CD4-positive, alpha-beta T cell (primary cell): ENCODE measurements at regions of chr11 and their contacts with region 1.

Region 1: DNA sequence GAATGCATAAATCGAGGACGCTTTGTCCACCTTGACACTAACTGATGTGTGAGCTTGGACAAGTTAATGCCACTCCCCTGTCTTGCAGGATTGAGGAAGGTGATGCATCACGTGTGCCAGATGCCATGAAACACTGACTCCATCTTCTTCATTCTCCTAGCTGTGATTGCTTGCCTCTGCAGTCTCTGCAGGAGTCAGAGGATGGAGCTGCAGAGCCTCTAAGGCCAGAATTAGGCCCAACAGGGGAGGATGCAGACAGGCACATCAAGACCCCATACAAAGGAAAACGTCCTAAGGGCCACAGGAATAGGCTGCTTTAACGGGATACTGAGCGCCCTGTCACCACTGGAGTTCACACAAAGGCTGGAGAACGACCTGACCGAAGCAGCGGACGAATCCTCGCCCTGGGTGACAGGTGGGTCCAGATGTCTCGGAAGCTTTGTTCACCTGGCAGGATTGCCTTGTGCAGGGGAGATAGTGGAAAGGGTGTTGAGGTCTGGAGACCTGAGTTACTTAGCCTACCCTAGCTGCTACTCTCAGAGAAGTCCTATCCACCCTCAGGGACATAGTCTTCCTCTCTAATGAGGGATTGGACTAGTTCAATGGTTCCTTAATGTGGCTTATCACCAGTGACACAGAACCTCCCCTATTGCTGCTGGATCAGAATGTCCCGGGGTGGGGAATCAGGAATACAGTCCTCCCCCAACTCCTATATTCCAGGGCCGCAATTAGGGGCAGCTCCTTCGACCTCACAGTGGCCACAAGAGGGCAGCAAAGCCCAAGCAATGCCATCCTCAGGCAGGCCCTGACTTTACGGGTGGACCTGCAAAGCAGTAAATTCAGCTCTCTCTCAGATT is 32.4 kb downstream of the DBX1 start:
- DNase-seq: peak; percentile 63 to 84 (median 70)
- ATAC-seq: peak; percentile 73
- H3K4me3 ChIP-seq: no peak overlapping the region
- H3K4me3 Mint-ChIP-seq: no peak overlapping the region
- H3K27ac ChIP-seq: no peak overlapping the region
- H3K27ac Mint-ChIP-seq: no peak overlapping the region
- H3K4me1 ChIP-seq: peaks cover 12% of the 10 kb centered on the region
- H3K4me1 Mint-ChIP-seq: peaks cover 5% of the 10 kb centered on the region
- H3K27me3 ChIP-seq: peaks cover 0 to 7% of the 10 kb centered on the region in 2 experiments
- H3K27me3 Mint-ChIP-seq: peaks cover 19% of the 10 kb centered on the region
- CTCF ChIP-seq: peak; percentile 80

Region 2: DNA sequence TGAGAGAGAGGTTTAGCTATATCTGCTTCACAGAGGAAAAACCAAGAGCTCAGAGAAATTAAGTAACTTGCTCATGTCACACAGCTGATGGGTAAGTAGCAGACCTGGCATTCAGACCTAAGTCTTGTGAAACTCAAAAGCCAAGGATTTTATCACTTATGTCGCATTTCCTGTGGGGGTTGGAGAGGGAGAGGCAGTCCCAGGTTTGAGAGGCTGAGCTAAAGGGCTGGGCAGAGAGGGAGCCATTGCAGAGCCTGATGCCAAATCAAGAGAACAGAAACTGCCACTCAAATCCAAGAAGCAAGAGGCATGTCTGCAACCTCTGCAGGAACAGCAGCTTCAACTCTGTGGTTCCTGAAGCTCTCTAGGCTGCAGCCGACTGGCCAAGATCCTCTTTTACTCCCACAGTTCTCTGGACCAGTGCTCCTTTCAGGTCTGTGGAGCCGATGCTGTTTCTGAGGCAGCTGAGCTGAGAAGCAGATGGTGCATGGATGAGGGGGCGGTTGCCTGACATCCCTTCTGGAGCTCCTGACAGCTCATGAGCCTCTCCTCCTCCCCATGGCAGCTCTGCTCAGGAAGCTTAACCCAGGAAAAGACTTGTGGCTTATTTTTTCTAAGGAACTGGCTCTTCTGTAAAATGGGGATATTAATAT is 462.9 kb before region 1 on chr11:
- CTCF ChIA-PET with region 1: no interaction called
- POLR2A ChIA-PET with region 1: no interaction called
- intact Hi-C with region 1: no loop called
- DNase-seq: no peak
- ATAC-seq: no peak
- H3K4me3 ChIP-seq: no peak overlapping the region
- H3K4me3 Mint-ChIP-seq: no peak overlapping the region
- H3K27ac ChIP-seq: no peak overlapping the region
- H3K27ac Mint-ChIP-seq: no peak overlapping the region
- H3K4me1 ChIP-seq: peaks cover 4% of the 10 kb centered on the region
- H3K4me1 Mint-ChIP-seq: no peaks in the 10 kb centered on the region
- H3K27me3 ChIP-seq: peaks cover 0 to 2% of the 10 kb centered on the region in 2 experiments
- H3K27me3 Mint-ChIP-seq: peaks cover 5% of the 10 kb centered on the region
- CTCF ChIP-seq: no peak

Region 3: GRCh38 chr11:19951558-19952115 is 176.3 kb before region 1 on chr11:
- CTCF ChIA-PET with region 1: no interaction called
- POLR2A ChIA-PET with region 1: no interaction called
- intact Hi-C with region 1: loop called in 1 of 2 experiments (anchors 5 kb)
- DNase-seq: peak in 3 of 14 experiments; percentile 46 to 61 (median 52)
- ATAC-seq: no peak
- H3K4me3 ChIP-seq: peak overlapping the region; percentile 5
- H3K4me3 Mint-ChIP-seq: peak overlapping the region; percentile 32
- H3K27ac ChIP-seq: no peak overlapping the region
- H3K27ac Mint-ChIP-seq: no peak overlapping the region
- H3K4me1 ChIP-seq: no peaks in the 10 kb centered on the region
- H3K4me1 Mint-ChIP-seq: peaks cover 9% of the 10 kb centered on the region
- H3K27me3 ChIP-seq: peaks cover 0 to 2% of the 10 kb centered on the region in 2 experiments
- H3K27me3 Mint-ChIP-seq: peaks cover 34% of the 10 kb centered on the region
- CTCF ChIP-seq: peak; percentile 75

Region 4: DNA sequence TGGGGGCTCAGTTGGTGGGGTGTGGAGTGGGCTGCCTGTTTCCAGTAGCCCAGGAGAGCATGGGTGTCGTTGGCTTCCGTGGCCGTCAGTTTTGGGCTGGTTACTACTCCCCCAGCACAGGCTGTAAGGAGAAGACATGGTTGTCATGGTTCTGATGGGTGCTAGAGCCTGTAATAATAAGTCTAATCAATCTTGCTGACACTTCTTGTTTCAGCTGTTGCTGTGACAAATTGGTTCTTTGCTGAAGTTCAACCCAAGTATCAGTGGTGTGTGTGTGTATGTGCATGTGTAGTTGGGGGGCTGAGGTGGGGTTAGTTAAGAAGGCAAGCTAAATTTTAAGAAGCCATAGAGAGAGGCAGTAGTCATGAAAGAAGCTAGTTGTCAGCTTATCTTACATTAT is 93.7 kb after region 1 on chr11:
- CTCF ChIA-PET with region 1: no interaction called
- POLR2A ChIA-PET with region 1: no interaction called
- intact Hi-C with region 1: no loop called
- DNase-seq: no peak
- ATAC-seq: no peak
- H3K4me3 ChIP-seq: no peak overlapping the region
- H3K4me3 Mint-ChIP-seq: no peak overlapping the region
- H3K27ac ChIP-seq: no peak overlapping the region
- H3K27ac Mint-ChIP-seq: no peak overlapping the region
- H3K4me1 ChIP-seq: no peaks in the 10 kb centered on the region
- H3K4me1 Mint-ChIP-seq: no peaks in the 10 kb centered on the region
- H3K27me3 ChIP-seq: peaks cover 0 to 8% of the 10 kb centered on the region in 2 experiments
- H3K27me3 Mint-ChIP-seq: peaks cover 15% of the 10 kb centered on the region
- CTCF ChIP-seq: no peak

Region 5: DNA sequence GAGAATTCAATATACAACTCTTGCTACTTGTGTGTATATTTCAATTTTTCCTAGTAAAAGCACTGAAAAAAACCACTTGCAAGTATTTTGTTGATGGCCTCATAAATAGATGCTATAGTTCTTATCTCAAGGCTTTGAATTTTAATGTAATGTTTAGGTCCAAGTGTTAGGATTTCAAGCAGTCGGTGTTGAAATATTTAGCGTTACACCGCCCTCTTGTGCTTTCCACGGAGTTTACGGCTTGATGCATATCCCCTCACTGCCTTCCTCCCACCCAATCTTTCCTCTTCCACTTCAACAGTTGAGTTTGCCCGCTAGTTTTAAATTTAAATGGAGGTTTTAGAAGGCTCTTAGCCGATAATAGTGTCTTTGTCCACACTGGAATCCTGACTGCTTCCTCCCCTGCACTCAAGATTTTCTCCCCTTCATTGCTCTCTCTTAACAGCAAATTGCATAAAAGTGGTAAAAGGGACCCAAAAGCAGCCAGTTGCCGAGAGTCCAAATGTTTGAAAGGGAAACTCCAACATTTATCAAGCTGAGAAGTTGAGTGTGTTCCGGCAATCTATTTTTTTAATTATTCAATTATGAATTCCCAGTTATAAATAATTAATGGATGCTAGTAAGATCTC is 209.7 kb after region 1 on chr11:
- CTCF ChIA-PET with region 1: interaction called, 5 read pairs
- POLR2A ChIA-PET with region 1: no interaction called
- intact Hi-C with region 1: loop called in 1 of 2 experiments (anchors 1 kb)
- DNase-seq: peak in 2 of 14 experiments; percentile 9 to 13
- ATAC-seq: no peak
- H3K4me3 ChIP-seq: no peak overlapping the region
- H3K4me3 Mint-ChIP-seq: no peak overlapping the region
- H3K27ac ChIP-seq: no peak overlapping the region
- H3K27ac Mint-ChIP-seq: no peak overlapping the region
- H3K4me1 ChIP-seq: peaks cover 4% of the 10 kb centered on the region
- H3K4me1 Mint-ChIP-seq: no peaks in the 10 kb centered on the region
- H3K27me3 ChIP-seq: peaks cover 17 to 29% of the 10 kb centered on the region in 2 experiments
- H3K27me3 Mint-ChIP-seq: peaks cover 76% of the 10 kb centered on the region
- CTCF ChIP-seq: peak; percentile 21

Region 6: DNA sequence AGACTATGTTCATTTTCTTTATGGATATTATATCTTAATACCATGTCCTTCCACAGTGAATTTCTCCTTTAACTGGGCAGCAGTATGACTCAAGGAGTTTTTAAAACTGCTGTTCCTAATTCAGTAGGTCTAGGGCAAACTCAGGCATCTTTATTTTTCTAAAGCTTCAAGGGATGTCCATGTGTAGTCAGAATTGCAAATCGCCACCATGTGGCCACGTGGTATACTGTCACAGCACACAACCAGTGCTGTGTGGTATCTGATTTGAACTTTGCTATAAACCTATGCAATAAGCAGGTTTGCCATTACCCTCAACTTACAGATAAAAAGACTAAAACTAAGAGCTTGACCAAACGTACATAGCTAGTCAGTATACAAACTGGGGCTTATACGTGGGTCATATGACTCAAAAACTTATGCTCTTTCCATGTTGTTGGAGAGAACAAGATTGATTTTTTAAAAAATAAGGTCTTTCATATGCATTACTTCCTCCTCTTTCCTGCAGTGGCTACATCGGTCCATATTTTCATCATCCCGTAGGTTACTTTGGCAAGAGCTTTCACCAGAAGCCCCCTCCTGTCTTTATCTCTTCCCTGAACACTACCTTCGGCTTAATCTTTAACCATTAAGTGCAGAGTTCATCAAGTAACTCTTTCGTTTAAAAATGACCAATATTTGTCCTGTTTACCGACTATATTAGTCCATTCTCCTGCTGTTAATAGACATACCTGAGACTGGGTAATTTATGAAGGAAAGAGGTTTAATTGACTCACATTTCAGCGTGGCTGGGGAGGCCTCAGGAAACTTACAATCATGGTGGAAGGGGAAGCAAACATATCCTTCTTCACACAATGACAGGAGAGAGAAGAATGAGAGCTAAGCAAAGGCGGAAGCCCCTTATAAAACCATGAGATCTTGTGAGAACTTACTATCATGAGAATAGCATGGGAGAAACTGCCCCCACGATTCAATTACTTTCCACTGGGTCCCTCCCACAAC is 227.6 kb after region 1 on chr11:
- CTCF ChIA-PET with region 1: interaction called, 24 read pairs
- POLR2A ChIA-PET with region 1: interaction called, 3 read pairs
- intact Hi-C with region 1: loop called (anchors 1 kb)
- DNase-seq: peak in 10 of 14 experiments; percentile 15 to 70 (median 34)
- ATAC-seq: peak; percentile 90
- H3K4me3 ChIP-seq: no peak overlapping the region
- H3K4me3 Mint-ChIP-seq: no peak overlapping the region
- H3K27ac ChIP-seq: no peak overlapping the region
- H3K27ac Mint-ChIP-seq: no peak overlapping the region
- H3K4me1 ChIP-seq: peaks cover 12% of the 10 kb centered on the region
- H3K4me1 Mint-ChIP-seq: peaks cover 16% of the 10 kb centered on the region
- H3K27me3 ChIP-seq: no peaks in the 10 kb centered on the region
- H3K27me3 Mint-ChIP-seq: no peaks in the 10 kb centered on the region
- CTCF ChIP-seq: peak; percentile 73

Region 7: DNA sequence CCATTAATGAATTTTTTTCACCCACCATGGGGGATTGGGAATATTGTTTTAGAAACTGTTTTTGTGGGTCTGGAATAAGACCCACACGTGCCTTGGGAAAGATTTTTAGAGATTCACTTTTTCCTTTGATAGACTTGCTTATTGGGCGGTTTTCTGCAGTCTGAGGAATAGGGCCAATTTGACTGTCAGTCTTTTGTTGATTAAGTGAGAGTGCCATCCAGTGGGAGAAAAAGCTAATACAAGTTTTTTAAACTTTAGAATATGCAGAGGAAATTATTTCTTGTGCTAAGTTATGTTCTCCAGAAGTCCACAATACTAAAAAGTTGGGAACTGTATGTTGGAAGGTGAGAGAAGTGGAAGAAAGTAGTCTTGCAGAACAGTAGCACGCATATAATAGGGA is 315.7 kb after region 1 on chr11:
- CTCF ChIA-PET with region 1: interaction called, 5 read pairs
- POLR2A ChIA-PET with region 1: no interaction called
- intact Hi-C with region 1: loop called in 1 of 2 experiments (anchors 5 kb)
- DNase-seq: peak in 3 of 14 experiments; percentile 5 to 17 (median 16)
- ATAC-seq: no peak
- H3K4me3 ChIP-seq: no peak overlapping the region
- H3K4me3 Mint-ChIP-seq: no peak overlapping the region
- H3K27ac ChIP-seq: no peak overlapping the region
- H3K27ac Mint-ChIP-seq: no peak overlapping the region
- H3K4me1 ChIP-seq: no peaks in the 10 kb centered on the region
- H3K4me1 Mint-ChIP-seq: no peaks in the 10 kb centered on the region
- H3K27me3 ChIP-seq: no peaks in the 10 kb centered on the region
- H3K27me3 Mint-ChIP-seq: no peaks in the 10 kb centered on the region
- CTCF ChIP-seq: peak; percentile 17

Region 8: DNA sequence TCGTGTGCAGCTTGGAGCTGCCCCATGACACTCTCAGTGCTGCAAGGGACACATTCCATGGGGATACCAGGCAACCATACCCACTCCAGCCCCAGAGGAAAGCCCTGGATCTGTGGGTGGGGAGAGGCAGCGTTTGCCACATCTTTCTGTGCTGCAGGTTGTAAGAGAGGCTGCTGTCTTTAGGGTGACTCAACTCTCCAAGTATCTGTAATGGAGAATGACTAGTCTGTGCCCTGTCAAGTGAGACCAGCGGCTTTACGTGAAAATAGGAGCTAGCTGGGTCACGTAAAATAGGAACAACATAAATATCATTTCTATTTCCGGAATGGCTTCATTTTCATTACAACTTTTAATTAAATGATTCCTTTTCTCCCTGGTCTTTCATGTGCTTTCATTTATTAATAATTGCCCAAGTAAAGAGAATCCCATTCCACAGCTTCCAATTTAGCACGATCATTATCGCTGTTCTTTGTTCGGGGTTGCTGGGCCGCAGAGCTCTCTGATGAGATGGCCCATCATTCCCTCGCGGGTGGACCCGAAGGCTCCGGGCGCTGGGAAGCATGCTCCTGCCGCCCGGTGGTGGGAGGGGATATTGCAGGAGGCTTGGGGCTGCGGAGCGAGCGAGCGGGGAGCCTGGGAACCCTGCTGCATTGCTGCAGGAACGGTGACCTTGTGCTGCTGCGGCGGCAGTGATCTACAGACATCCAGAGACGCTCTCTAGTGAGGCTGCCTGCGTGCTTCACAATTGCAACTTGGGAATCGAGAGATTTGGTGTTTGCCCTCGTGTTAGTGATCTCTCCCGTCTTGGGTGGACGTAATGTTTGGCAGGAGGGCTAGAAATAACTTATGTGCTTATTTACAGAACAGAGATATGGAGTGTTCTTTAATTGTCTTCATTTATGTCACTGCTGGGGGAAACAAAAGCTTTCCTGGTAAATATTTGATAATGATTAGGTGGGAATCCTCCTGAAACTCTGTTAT is 482.1 kb after region 1 on chr11:
- CTCF ChIA-PET with region 1: no interaction called
- POLR2A ChIA-PET with region 1: no interaction called
- intact Hi-C with region 1: loop called in 1 of 2 experiments (anchors 2 kb)
- DNase-seq: peak in 13 of 14 experiments; percentile 23 to 62 (median 31)
- ATAC-seq: peak; percentile 62
- H3K4me3 ChIP-seq: no peak overlapping the region
- H3K4me3 Mint-ChIP-seq: no peak overlapping the region
- H3K27ac ChIP-seq: no peak overlapping the region
- H3K27ac Mint-ChIP-seq: no peak overlapping the region
- H3K4me1 ChIP-seq: peaks cover 6% of the 10 kb centered on the region
- H3K4me1 Mint-ChIP-seq: peaks cover 7% of the 10 kb centered on the region
- H3K27me3 ChIP-seq: peaks cover 44 to 70% of the 10 kb centered on the region in 2 experiments
- H3K27me3 Mint-ChIP-seq: peaks cover 94% of the 10 kb centered on the region
- CTCF ChIP-seq: peak; percentile 70

Region 9: DNA sequence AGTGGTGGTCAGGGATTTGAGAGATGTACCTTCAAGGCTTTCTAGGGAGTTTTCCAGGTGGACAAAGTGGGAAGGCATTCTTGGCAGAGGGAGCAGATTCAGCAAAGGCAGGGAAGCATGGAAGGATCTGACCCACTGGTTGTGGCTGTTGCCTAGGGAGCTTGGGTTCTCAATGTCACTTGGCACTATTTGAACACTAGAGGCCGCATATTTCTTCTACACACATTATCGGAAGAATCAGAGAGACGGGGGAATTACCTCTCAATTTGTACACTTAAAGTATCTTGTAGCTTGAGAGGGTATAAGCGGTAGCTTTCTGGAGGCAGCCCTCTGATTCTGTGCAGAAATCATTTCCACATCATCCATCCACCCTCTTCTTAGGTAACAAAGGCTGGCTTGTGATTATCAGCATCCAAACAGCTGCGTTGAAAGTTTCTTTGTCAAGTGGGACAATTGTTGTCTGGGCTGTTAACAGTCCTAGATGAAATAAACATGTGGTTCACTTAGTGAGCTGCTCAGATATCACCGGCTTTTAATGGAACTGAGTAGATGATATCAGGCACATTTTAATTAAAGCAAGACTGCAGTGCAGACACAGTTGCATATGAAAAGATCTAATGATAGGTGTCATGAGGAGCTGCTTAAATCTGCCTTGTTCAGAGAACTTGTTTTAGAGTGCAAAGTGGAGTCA is 544.1 kb after region 1 on chr11:
- CTCF ChIA-PET with region 1: no interaction called
- POLR2A ChIA-PET with region 1: no interaction called
- intact Hi-C with region 1: loop called in 1 of 2 experiments (anchors 10 kb)
- DNase-seq: no peak
- ATAC-seq: no peak
- H3K4me3 ChIP-seq: no peak overlapping the region
- H3K4me3 Mint-ChIP-seq: no peak overlapping the region
- H3K27ac ChIP-seq: no peak overlapping the region
- H3K27ac Mint-ChIP-seq: no peak overlapping the region
- H3K4me1 ChIP-seq: peaks cover 3% of the 10 kb centered on the region
- H3K4me1 Mint-ChIP-seq: peaks cover 9% of the 10 kb centered on the region
- H3K27me3 ChIP-seq: peaks cover 37 to 61% of the 10 kb centered on the region in 2 experiments
- H3K27me3 Mint-ChIP-seq: peaks cover 85% of the 10 kb centered on the region
- CTCF ChIP-seq: no peak